K562 (cell line): ENCODE measurements at regions of chr17 and their contacts with region 1.

Region 1: GRCh38 chr17:20315821-20316220 is 151.5 kb downstream of the LGALS9B start:
- DNase-seq: no peak
- ATAC-seq: no peak
- H3K4me3 ChIP-seq: no peak overlapping the region
- H3K27ac ChIP-seq: no peak overlapping the region
- H3K4me1 ChIP-seq: 0 out of 5 replicates have a peak, but pooled peaks cover 0 to 5% of the 10 kb centered on the region in 2 experiments
- H3K27me3 ChIP-seq: no peaks in the 10 kb centered on the region
- CTCF ChIP-seq: no peak
- EP300 ChIP-seq: no peak
- POLR2A ChIP-seq: no peak
- RAD21 ChIP-seq: no peak

Region 2: DNA sequence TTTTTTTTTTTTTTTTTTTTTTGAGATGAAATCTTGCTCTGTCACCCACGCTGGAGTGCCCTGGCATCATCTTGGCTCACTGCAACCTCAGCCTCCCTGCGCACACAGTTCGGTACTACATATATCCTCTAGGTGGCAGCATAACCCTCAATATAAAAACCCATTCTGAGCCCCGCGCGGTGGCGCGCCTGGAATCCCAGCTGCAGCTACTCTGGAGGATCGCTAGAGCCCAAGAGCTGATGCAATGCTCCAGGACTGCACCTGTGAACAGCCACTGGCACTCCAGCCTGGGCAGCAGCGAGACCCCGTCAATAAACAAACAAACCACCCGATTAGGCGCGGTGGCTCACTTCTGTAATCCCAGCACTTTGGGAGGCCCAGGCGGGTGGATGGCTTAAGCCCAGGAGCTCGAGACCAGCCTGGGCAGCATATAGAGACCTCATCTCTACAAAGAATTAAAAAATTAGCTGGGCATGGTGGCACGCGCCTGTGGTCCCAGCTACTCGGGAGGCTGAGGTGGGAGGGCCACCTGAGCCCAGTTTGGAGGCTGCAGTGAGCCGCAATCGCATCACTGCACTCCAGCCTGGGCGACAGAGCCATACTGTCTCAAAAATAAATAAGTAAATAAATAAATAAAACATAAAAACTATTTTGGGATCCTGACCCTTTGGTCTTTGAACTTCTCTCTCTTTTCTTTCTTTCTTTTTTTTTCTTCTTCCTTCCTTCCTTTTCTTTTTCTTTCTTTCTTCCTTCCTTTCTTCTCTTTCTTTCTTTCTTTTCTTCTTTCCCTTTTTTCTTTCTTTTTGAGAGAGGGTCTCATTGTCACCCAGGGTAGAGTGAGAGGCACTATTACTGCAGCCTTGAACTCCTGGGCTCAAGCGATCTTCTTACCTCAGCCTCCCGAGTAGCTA is 322.8 kb before region 1 on chr17:
- CTCF ChIA-PET with region 1: no interaction called
- POLR2A ChIA-PET with region 1: interaction called, 3 read pairs
- in situ Hi-C with region 1: loop called (anchors 10 kb)
- intact Hi-C with region 1: no loop called
- DNase-seq: peak; percentile 53 to 87 (median 56)
- ATAC-seq: peak; percentile 97
- H3K4me3 ChIP-seq: no peak overlapping the region
- H3K27ac ChIP-seq: no peak overlapping the region
- H3K4me1 ChIP-seq: peaks cover 6 to 8% of the 10 kb centered on the region in 2 experiments; a peak in 3 of 5 replicates
- H3K27me3 ChIP-seq: no peaks in the 10 kb centered on the region
- CTCF ChIP-seq: peak; percentile 67 to 97 (median 93)
- EP300 ChIP-seq: no peak
- POLR2A ChIP-seq: no peak
- RAD21 ChIP-seq: peak; percentile 60 to 88

Region 3: DNA sequence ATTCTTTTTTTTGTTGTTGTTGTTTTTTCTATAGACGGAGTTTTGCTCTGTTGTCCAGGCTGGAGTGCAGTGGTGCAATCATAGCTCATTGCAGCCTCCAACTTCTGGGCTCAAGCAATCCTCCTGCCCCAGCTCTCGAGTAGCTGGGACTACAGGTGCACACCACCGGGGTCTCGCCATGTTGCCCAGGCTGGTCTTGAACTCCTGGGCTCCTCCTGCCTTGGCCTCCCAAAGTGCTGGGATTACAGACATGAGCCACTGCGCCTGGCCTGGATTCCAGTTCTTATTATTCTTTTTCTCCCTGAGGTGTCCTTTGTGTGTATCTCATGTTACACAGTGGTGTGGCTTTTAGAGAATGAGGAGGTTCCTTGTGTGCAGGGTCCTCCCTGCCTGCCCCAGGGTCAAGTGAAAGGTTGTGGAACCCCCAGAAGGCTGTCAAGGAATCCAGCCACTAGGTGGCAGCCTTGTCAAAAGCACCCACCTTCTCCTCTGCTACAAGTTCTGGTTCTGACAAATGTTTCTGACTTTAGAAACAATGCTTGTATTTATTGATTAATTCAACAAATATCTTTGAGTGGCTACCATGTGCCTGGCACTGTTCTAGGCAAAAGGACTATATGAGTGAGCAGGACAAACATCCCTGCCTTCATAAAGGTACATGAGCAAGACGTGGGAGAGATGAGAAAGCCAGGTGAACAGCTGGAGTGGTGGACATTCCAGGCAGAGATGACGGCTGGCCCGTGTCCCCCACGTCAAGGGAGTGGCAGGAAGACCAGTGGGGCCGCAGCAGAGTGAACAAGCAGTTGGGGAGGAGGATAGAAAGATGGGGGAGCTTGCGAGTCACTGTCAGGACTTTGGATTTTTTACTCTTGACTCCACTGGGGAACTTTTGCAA is 194.2 kb before region 1 on chr17:
- CTCF ChIA-PET with region 1: interaction called, 13 read pairs
- POLR2A ChIA-PET with region 1: no interaction called
- in situ Hi-C with region 1: loop called (anchors 10 kb)
- intact Hi-C with region 1: loop called (anchors 5 kb)
- DNase-seq: peak; percentile 58 to 74 (median 60)
- ATAC-seq: peak; percentile 86
- H3K4me3 ChIP-seq: no peak overlapping the region
- H3K27ac ChIP-seq: no peak overlapping the region
- H3K4me1 ChIP-seq: no peaks in the 10 kb centered on the region
- H3K27me3 ChIP-seq: no peaks in the 10 kb centered on the region
- CTCF ChIP-seq: peak; percentile 82 to 84 (median 83)
- EP300 ChIP-seq: no peak
- POLR2A ChIP-seq: no peak
- RAD21 ChIP-seq: peak; percentile 73 to 88

Region 4: DNA sequence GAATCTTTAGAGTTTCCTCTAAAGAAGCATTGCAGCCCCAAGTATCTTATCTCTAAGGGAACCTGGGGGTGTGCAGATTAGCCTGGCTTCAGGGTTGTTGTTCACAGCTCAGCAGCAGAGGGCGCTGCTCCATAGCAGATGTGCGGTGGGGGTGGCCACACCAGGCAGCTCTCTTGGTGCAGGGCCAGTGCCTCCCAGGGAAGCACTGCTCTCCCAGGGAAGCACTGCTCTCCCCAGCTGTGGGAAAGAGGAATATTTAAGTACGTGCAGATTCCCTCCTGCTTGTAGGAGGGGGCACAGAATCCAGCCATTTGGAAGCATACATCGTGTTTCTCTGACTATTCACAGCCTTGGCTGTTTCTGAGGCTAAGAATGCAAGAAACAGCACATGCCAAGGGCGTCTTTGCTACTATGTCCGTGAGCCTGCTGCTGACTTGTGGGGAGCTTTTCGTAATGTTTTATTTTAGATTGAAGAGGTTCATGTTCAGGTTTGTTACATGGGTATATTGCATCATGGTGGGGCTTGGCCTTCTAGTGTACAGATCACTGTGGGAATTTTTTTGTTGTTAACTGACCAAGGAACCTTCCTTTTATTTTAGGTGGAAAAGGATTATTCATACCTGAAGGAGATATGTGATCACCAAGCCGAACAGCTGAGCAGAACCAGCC is 88.9 kb before region 1 on chr17:
- CTCF ChIA-PET with region 1: interaction called, 15 read pairs
- POLR2A ChIA-PET with region 1: no interaction called
- in situ Hi-C with region 1: loop called (anchors 5 kb)
- intact Hi-C with region 1: loop called (anchors 2 kb)
- DNase-seq: peak; percentile 79 to 83 (median 80)
- ATAC-seq: peak; percentile 99
- H3K4me3 ChIP-seq: no peak overlapping the region
- H3K27ac ChIP-seq: no peak overlapping the region
- H3K4me1 ChIP-seq: peaks cover 0 to 6% of the 10 kb centered on the region in 2 experiments; a peak in 3 of 5 replicates
- H3K27me3 ChIP-seq: no peaks in the 10 kb centered on the region
- CTCF ChIP-seq: peak; percentile 83 to 90 (median 86)
- EP300 ChIP-seq: no peak
- POLR2A ChIP-seq: no peak
- RAD21 ChIP-seq: peak; percentile 75 to 90

Region 5: GRCh38 chr17:20234276-20234675 is 81.5 kb before region 1 on chr17:
- CTCF ChIA-PET with region 1: no interaction called
- POLR2A ChIA-PET with region 1: no interaction called
- in situ Hi-C with region 1: loop called (anchors 5 kb)
- intact Hi-C with region 1: no loop called
- DNase-seq: no peak
- ATAC-seq: no peak
- H3K4me3 ChIP-seq: no peak overlapping the region
- H3K27ac ChIP-seq: no peak overlapping the region
- H3K4me1 ChIP-seq: no peaks in the 10 kb centered on the region
- H3K27me3 ChIP-seq: no peaks in the 10 kb centered on the region
- CTCF ChIP-seq: no peak
- EP300 ChIP-seq: no peak
- POLR2A ChIP-seq: no peak
- RAD21 ChIP-seq: no peak

Region 6: GRCh38 chr17:20302246-20302917 is 13.4 kb before region 1 on chr17:
- CTCF ChIA-PET with region 1: no interaction called
- POLR2A ChIA-PET with region 1: no interaction called
- in situ Hi-C with region 1: no loop called
- intact Hi-C with region 1: no loop called
- DNase-seq: no peak
- ATAC-seq: no peak
- H3K4me3 ChIP-seq: no peak overlapping the region
- H3K27ac ChIP-seq: no peak overlapping the region
- H3K4me1 ChIP-seq: no peaks in the 10 kb centered on the region
- H3K27me3 ChIP-seq: no peaks in the 10 kb centered on the region
- CTCF ChIP-seq: no peak
- EP300 ChIP-seq: no peak
- POLR2A ChIP-seq: no peak
- RAD21 ChIP-seq: no peak

Region 7: DNA sequence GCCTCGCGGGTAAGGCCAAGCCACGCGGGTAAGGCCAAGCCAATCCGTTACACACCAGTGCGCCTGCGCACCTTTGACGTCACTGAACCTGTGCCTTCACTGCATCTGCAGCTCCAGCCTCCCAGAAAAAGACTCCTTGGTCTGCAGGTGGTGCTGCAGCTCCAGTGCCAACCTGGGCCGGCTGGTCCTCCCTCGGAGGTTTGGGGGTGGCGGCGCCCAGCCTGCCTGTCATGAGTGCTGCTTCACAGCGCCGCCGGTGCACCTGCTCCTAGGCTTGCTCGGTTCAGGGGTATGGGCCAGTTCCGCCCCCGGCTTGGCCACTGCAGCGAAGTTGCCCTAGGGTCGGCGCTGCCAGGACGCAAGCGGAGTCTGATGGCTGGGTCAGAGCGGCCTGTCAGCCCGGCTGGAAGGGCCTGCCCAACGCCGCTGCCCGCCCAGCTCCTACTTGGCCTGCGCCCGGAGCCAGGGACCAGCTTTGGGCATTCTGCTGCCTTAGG is 580.4 kb after region 1 on chr17:
- CTCF ChIA-PET with region 1: no interaction called
- POLR2A ChIA-PET with region 1: no interaction called
- in situ Hi-C with region 1: loop called (anchors 10 kb)
- intact Hi-C with region 1: no loop called
- DNase-seq: no peak
- ATAC-seq: no peak
- H3K4me3 ChIP-seq: no peak overlapping the region
- H3K27ac ChIP-seq: no peak overlapping the region
- H3K4me1 ChIP-seq: peaks cover 0 to 5% of the 10 kb centered on the region in 2 experiments; a peak in 1 of 5 replicates
- H3K27me3 ChIP-seq: no peaks in the 10 kb centered on the region
- CTCF ChIP-seq: no peak
- EP300 ChIP-seq: no peak
- POLR2A ChIP-seq: no peak
- RAD21 ChIP-seq: no peak